Dorsolateral prefrontal cortex (tissue), 120 donors: ENCODE measurements at regions of chr3 and their contacts with region 1.

Region 1: DNA sequence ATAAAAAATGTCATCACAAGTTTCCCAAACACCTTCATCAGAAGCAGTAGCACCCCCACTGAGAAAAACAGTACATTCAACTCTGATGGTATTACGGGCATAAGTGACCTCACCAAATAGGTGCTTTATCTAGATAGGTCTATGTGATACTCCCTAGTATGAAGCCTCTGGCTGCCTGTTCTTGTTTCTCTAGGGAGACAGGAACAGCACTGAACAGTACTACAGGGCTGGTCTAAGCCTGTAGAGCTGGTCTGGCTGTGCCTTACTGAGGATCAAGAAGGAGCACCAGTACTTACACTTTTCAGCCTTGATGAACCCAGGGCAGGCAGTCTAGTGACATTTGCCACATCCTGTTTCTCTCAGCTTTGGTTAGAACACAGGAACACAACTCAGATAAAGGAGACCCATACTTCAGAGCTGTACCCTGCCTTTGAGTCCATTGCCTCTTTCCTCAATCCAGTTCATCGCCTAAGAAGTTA is 35.9 kb downstream of the OXNAD1 start:
- DNase-seq: no peak
- H3K4me3 ChIP-seq: no peak overlapping the region
- H3K27ac ChIP-seq: peak overlapping the region in 38 of 59 donors; percentile 0 to 72 (median 36)
- H3K27me3 ChIP-seq: no peaks in the 10 kb centered on the region
- CTCF ChIP-seq: no peak

Region 2: DNA sequence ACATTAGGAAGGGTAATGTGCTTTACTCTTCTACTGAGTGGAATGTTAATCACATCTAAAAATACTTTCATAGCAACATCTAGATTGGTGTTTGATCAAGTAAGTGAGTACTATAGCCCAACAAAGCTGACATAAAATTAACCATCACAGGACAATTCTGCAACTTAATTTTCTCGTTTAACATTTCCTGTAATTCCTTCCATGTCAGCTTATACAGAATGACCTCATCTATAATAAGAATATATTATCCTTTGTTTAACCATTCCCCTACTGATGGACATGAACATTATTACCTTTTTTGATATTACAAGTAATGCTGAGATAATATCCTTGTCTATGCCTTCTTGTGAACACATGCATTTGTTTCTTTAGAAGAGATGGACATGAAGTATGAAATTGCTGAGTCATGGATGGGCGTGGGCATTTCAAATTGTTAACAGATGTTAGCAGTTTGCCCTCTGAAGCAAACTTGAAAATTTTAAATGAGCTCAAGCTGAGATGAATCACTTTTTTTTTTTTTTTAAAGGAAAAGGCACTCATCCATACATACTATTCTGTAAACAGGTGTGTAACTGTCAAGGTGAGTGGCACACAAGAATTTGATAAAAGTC is 49.2 kb after region 1 on chr3:
- intact Hi-C with region 1: loop called in 1 of 2 experiments (anchors 5 kb)
- DNase-seq: no peak
- H3K4me3 ChIP-seq: no peak overlapping the region
- H3K27ac ChIP-seq: peak overlapping the region in 25 of 59 donors; percentile 1 to 72 (median 33)
- H3K27me3 ChIP-seq: no peaks in the 10 kb centered on the region
- CTCF ChIP-seq: no peak